Posterior vena cava (tissue), 2 donors: ENCODE measurements at regions of chr5 and their contacts with region 1.

Region 1: GRCh38 chr5:181223058-181223728 is at the start of gene TRIM41:
- DNase-seq: peak; percentile 100
- total RNA-seq, gene TRIM41: 15.2 to 20.4 TPM

Region 2: GRCh38 chr5:181191529-181192394 is 31.4 kb before region 1 on chr5:
- intact Hi-C with region 1: loop called in 1 of 2 experiments (anchors 2 kb)
- DNase-seq: peak; percentile 98

Region 3: GRCh38 chr5:181260387-181261319 is 37.5 kb after region 1 on chr5 and contains the start of gene TRIM52:
- intact Hi-C with region 1: loop called in 1 of 2 experiments (anchors 1 kb)
- DNase-seq: peak; percentile 98
- total RNA-seq, gene TRIM52: 9.5 to 12.1 TPM